B cell (primary cell): ENCODE measurements at regions of chr4 and their contacts with region 1.

Region 1: GRCh38 chr4:168480931-168481611 is 779 bp upstream of the DDX60L start:
- DNase-seq: peak; percentile 78
- ATAC-seq: peak; percentile 43
- H3K4me3 ChIP-seq: peak overlapping the region; percentile 86 to 97 (median 91)
- H3K4me3 Mint-ChIP-seq: peak overlapping the region; percentile 98
- H3K27ac ChIP-seq: peak overlapping the region; percentile 88 to 92
- H3K27ac Mint-ChIP-seq: peak overlapping the region; percentile 98
- H3K4me1 ChIP-seq: peaks cover 12% of the 10 kb centered on the region in 2 donors
- H3K4me1 Mint-ChIP-seq: peaks cover 44% of the 10 kb centered on the region
- H3K27me3 ChIP-seq: no peaks in the 10 kb centered on the region
- H3K27me3 Mint-ChIP-seq: peaks cover 5% of the 10 kb centered on the region
- CTCF ChIP-seq: no peak

Region 2: GRCh38 chr4:168318266-168318895 is 162.7 kb before region 1 on chr4 and contains the start of gene DDX60:
- CTCF ChIA-PET with region 1: interaction called, 4 read pairs
- POLR2A ChIA-PET with region 1: interaction called, 8 read pairs
- intact Hi-C with region 1: loop called (anchors 1 kb)
- DNase-seq: peak; percentile 91
- ATAC-seq: peak; percentile 94
- H3K4me3 ChIP-seq: peak within 1 kb of the TSS; percentile 64 to 90 (median 83)
- H3K4me3 Mint-ChIP-seq: peak within 1 kb of the TSS; percentile 98
- H3K27ac ChIP-seq: peak within 1 kb of the TSS; percentile 80 to 95
- H3K27ac Mint-ChIP-seq: peak within 1 kb of the TSS; percentile 98
- H3K4me1 ChIP-seq: peaks cover 11 to 12% of the 10 kb centered on the region in 2 donors
- H3K4me1 Mint-ChIP-seq: peaks cover 28% of the 10 kb centered on the region
- H3K27me3 ChIP-seq: no peaks in the 10 kb centered on the region
- H3K27me3 Mint-ChIP-seq: no peaks in the 10 kb centered on the region
- CTCF ChIP-seq: peak; percentile 30
- total RNA-seq, gene DDX60: 20.2 and 21.3 TPM in 2 replicates